Body of pancreas (tissue), 4 donors: ENCODE measurements at regions of chr11 and their contacts with region 1.

Region 1: DNA sequence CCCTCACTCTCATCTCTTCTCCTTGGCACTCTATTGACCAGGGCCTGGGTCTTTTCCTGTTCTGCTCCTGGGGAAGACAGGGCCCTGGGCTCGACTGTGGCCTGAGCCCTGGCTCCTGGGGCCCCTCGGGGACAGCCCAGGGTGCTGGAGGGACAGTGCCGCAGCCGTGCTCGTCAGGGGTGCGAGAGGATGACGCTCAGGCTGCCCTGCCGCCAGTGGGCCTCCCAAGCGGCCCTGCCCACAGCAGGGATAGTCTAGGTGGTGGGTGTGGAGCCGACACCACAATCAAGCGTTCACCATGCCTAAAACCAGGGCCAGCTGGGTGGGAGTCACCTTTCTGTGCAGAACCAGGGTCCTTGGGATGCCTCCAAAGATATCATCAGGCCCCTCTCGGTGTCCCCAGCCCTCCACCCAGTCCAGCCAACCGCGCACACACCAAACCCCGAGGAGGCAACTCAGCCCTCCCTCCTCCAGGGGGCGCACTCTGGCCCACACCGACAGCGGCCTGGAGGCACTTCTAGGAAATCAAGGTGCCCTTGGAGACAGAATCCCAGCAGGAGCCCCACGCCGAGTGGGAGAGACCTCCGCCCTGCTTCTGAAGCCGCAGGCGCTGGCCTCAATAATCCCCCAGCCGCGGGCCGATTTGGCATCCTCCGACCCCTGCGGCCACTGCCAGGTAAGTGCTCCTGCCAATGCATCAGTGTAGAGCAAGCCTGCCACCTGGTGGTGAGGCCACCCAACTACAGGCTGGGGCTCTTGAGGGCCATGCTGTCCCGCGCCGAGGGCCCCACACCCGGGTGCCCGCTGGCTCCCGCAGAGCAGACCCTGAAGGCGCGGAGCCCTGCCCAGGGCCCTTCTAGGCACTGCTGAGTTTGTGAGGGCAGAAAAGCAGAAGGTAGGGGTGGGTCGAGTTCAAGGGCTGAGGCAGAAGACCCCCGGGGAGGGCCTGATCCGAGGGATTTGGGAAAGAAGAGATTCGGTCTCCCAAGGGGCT is 496.4 kb downstream of the BUD13 start:
- DNase-seq: peak; percentile 66 to 85 (median 80)
- ATAC-seq: peak; percentile 82
- H3K4me3 ChIP-seq: no peak overlapping the region
- H3K27ac ChIP-seq: no peak overlapping the region
- H3K4me1 ChIP-seq: peaks cover 8% of the 10 kb centered on the region
- H3K27me3 ChIP-seq: peaks cover 0 to 5% of the 10 kb centered on the region in 2 donors
- CTCF ChIP-seq: peak; percentile 58 to 96 (median 92)
- POLR2A ChIP-seq: no peak

Region 2: GRCh38 chr11:115324581-115325432 is 951.5 kb before region 1 on chr11:
- intact Hi-C with region 1: loop called (anchors 10 kb)
- DNase-seq: peak; percentile 17 to 57 (median 38)
- ATAC-seq: peak; percentile 75
- H3K4me3 ChIP-seq: no peak overlapping the region
- H3K27ac ChIP-seq: no peak overlapping the region
- H3K4me1 ChIP-seq: no peaks in the 10 kb centered on the region
- H3K27me3 ChIP-seq: no peaks in the 10 kb centered on the region
- CTCF ChIP-seq: peak; percentile 63 to 86 (median 76)
- POLR2A ChIP-seq: no peak

Region 3: DNA sequence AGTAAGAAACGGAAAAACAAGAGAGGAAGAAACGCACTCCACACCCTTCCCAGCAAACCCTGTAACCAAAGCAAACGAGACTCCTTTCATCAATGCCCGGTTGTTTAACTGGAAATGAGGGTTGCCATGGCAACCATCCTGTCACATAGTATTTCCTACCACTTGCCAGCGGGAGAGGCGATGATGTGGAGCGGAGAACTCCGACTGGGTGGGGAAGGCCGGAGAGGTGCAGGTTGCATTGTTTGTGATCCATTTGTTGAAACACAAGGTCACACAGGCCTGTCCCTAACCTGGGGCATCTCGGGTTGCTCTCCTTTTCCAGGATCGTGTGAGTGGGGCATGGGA is 113.5 kb before region 1 on chr11:
- intact Hi-C with region 1: no loop called
- DNase-seq: peak in 1 of 4 donors; percentile 10
- ATAC-seq: no peak
- H3K4me3 ChIP-seq: no peak overlapping the region
- H3K27ac ChIP-seq: no peak overlapping the region
- H3K4me1 ChIP-seq: no peaks in the 10 kb centered on the region
- H3K27me3 ChIP-seq: no peaks in the 10 kb centered on the region
- CTCF ChIP-seq: no peak
- POLR2A ChIP-seq: no peak